ENCODE measurements at regions of chr5 and their contacts with region 1.

Region 1: GRCh38 chr5:127564002-127564769 is 46.7 kb downstream of the PRRC1 start:
- DNase-seq: peak; percentile 64
- H3K4me3 Mint-ChIP-seq: no peak overlapping the region
- H3K27ac Mint-ChIP-seq: no peak overlapping the region
- H3K4me1 Mint-ChIP-seq: peaks cover 8% of the 10 kb centered on the region
- H3K27me3 Mint-ChIP-seq: peaks cover 23% of the 10 kb centered on the region

Region 2: GRCh38 chr5:127580731-127581130 is 16.5 kb after region 1 on chr5:
- CTCF ChIA-PET with region 1: no interaction called
- DNase-seq: no peak
- H3K4me3 Mint-ChIP-seq: no peak overlapping the region
- H3K27ac Mint-ChIP-seq: no peak overlapping the region
- H3K4me1 Mint-ChIP-seq: no peaks in the 10 kb centered on the region
- H3K27me3 Mint-ChIP-seq: peaks cover 6% of the 10 kb centered on the region

Region 3: DNA sequence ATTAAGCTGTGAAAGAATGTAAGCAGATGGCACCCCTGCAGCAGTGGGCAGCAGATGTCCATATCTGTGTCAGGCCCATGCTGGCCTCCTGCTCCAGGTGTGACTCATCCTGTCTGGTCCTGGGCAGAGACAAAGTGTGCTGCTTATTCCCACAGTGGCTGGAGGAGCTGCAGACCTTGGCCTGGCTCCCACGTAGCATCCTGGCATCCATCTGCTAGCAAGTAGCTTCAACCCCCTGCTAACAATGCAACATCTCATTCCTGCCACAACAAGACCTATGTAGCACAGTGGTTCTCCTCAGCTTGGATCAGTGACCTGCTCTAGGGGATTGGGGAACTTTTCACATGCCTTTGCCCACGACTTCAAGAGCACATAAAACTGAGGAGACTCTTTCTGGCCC is 393.0 kb after region 1 on chr5:
- CTCF ChIA-PET with region 1: no interaction called
- DNase-seq: no peak
- H3K4me3 Mint-ChIP-seq: no peak overlapping the region
- H3K27ac Mint-ChIP-seq: no peak overlapping the region
- H3K4me1 Mint-ChIP-seq: peaks cover 2% of the 10 kb centered on the region
- H3K27me3 Mint-ChIP-seq: no peaks in the 10 kb centered on the region

Region 4: GRCh38 chr5:128201065-128201926 is 637.1 kb after region 1 on chr5:
- CTCF ChIA-PET with region 1: interaction called, 14 read pairs
- DNase-seq: peak; percentile 89
- H3K4me3 Mint-ChIP-seq: no peak overlapping the region
- H3K27ac Mint-ChIP-seq: no peak overlapping the region
- H3K4me1 Mint-ChIP-seq: peaks cover 30% of the 10 kb centered on the region
- H3K27me3 Mint-ChIP-seq: peaks cover 6% of the 10 kb centered on the region

Region 5: DNA sequence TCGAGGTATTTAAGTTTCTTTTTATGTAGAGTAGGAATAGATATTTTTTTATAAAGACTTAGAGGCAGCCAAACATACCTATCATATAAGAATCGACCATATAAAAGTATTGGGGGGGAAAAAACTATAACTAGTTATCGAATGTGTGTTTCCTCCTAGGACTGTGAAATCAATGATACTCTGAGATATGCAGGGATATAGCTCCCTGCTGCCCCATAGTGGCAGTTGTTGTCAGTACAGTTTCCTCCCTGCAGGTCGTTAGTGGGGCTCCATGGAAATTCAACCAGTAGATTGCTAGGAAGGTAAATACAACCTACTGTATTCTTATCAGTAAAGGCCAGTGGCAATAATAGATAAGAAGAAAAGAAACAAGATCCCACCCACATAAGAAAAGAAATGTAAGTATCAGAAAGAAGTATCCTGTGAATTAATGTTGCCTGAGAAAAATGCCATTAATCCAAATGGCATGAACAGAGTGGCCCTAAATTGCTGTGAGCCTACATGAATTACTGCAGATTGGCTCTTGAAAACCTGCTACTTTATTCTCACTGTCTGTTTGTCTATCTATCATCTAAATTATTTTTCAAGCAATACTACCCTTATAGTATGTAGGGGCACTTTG is 1110.8 kb after region 1 on chr5:
- CTCF ChIA-PET with region 1: interaction called, 10 read pairs
- DNase-seq: peak; percentile 50
- H3K4me3 Mint-ChIP-seq: no peak overlapping the region
- H3K27ac Mint-ChIP-seq: no peak overlapping the region
- H3K4me1 Mint-ChIP-seq: no peaks in the 10 kb centered on the region
- H3K27me3 Mint-ChIP-seq: no peaks in the 10 kb centered on the region

Measured in activated naive CD4-positive, alpha-beta T cell treated with anti-CD3 and anti-CD28 coated beads, Interleukin-2, amount 10 ng/mL, durations not matched to agents 7 days and 5 days (primary cell).